OCI-LY7 (cell line): ENCODE measurements at regions of chr12 and their contacts with region 1.

Region 1: GRCh38 chr12:125183187-125184067 is 118.2 kb downstream of the AACS start:
- DNase-seq: peak; percentile 83
- H3K4me3 ChIP-seq: peak overlapping the region; percentile 15
- H3K27ac ChIP-seq: no peak overlapping the region
- H3K4me1 ChIP-seq: peaks cover 48% of the 10 kb centered on the region
- CTCF ChIP-seq: peak; percentile 95

Region 2: DNA sequence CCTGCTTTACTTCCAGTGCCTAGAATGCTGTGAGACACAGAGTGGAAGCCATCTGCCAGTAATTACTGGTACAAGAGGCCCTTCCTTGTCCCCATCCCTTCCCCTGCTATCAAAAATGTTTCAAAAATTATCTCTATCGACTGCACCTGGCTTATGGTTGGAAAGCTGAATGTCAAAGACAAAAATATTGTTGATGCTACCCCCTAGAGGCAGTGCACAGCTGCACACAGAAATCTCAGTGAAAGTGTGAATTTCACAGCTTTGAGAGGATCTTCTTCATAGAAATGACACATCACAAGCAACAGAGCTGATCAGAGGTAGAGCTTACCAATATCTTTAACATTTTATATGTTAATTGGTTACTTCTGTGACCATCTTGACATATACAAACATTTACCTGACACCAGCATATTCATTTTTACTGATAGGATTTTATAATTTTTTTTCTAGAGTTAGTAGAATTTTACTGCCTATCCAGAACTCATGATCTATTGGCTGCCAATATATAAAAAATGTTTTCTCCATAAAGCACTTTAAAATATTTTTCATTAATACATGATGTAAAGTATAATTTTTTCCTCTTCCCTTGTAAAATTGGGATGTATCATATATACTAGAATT is 19.8 kb after region 1 on chr12:
- CTCF ChIA-PET with region 1: interaction called, 4 read pairs
- POLR2A ChIA-PET with region 1: interaction called, 9 read pairs
- intact Hi-C with region 1: loop called (anchors 1 kb)
- DNase-seq: peak; percentile 75
- H3K4me3 ChIP-seq: no peak overlapping the region
- H3K27ac ChIP-seq: no peak overlapping the region
- H3K4me1 ChIP-seq: peaks cover 17% of the 10 kb centered on the region
- CTCF ChIP-seq: peak; percentile 93

Region 3: DNA sequence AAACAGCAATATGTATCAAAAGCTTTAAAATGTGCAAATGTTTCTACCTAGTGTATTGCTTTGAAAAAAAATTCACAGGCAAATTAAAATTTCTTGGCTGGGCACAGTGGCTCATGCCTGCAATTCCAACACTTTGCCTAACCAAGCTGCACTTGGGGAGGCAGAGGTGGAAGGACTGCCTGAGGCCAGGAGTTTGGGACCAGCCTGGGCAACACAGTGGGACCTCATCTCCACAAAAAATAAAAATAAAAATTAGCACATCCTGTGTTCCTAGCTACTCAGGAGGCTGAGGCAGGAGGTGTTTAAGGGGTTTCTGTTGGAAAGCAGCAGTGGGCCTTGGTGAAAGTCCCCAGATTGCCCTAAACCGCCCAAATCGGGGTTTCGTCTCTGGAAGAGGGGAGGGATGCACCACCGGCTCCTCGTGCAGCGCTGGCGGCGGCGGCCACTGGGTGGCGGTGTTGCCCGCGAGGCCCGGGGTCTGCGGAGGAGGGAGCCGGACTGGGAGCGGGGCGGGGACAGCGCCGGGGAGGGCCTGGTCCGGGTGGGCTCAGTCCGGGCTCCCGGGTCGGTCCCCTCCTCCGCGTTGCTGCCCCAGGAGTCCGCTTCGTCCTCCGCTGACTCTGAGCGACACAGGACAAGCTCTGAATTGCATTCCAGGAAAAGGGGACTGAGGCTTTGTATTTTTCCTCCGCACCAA is 147.4 kb after region 1 on chr12:
- CTCF ChIA-PET with region 1: interaction called, 3 read pairs
- POLR2A ChIA-PET with region 1: no interaction called
- intact Hi-C with region 1: loop called (anchors 5 kb)
- DNase-seq: peak; percentile 53
- H3K4me3 ChIP-seq: no peak overlapping the region
- H3K27ac ChIP-seq: no peak overlapping the region
- H3K4me1 ChIP-seq: peaks cover 8% of the 10 kb centered on the region
- CTCF ChIP-seq: peak; percentile 86

Region 4: DNA sequence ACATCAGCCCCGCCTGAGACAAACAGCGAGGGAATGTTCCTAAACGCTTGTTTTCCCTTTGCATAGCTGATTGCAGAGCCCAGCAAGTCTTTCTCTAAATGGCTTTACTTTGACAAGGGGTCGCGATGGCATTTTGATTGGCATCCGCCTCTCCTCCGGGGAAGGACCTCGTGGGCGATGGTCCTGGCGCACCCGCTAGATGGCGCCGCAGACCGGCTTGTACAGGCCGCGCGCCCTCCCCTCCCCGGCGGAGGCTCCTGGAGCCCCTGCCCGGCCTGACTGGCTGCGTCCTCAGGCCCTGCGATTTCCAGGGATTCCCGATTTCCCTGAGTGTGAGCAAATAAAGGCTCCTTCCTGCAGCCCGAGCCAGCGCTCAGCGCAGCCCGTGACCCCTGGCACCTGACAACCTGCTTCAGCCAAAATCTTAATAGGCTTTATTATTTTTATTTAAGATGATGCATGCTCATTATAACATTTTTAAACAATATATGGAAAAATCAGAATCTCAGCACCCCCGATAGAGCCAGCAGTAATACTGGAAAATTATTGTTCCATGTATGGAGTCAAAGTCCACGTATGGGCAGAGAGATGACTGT is 350.1 kb after region 1 on chr12:
- CTCF ChIA-PET with region 1: no interaction called
- POLR2A ChIA-PET with region 1: no interaction called
- intact Hi-C with region 1: loop called (anchors 2 kb)
- DNase-seq: peak; percentile 56
- H3K4me3 ChIP-seq: no peak overlapping the region
- H3K27ac ChIP-seq: no peak overlapping the region
- H3K4me1 ChIP-seq: no peaks in the 10 kb centered on the region
- CTCF ChIP-seq: peak; percentile 89

Region 5: DNA sequence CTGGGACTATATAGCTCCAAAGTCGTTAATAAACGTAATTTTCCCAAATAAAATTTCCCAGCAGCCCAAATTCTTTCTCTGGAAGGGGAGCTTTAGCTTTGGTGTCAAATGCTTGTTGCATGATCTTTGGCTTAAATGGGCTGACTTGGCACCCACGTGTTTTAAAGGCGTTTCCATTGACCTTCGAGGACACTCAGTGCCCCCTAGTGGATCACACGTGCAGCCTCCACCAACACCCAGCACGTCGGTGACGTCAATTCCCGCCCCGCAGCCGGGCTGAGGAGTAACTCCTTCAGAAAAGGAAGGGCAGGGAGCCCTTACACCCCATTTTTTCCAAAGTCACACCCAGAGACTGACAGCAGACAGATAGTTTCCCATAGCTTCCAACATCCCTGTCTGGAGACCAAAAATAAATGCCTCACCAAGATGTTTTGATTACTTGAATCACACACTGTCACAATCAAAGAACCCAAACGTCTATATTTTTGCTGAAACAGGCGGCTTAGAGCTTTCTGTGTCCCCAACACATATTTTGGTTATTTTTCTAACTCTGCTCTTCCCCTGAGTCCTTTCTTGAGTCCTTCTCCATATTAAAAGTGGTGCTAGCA is 589.7 kb after region 1 on chr12:
- CTCF ChIA-PET with region 1: no interaction called
- POLR2A ChIA-PET with region 1: no interaction called
- intact Hi-C with region 1: loop called (anchors 2 kb)
- DNase-seq: peak; percentile 77
- H3K4me3 ChIP-seq: no peak overlapping the region
- H3K27ac ChIP-seq: no peak overlapping the region
- H3K4me1 ChIP-seq: no peaks in the 10 kb centered on the region
- CTCF ChIP-seq: peak; percentile 89